Activated B cell treated with CpG ODN at 0.5 μM for 24 hours (primary cell): ENCODE measurements at regions of chr12 and their contacts with region 1.

Region 1: GRCh38 chr12:131642101-131642540 is 68.8 kb upstream of the SFSWAP start:
- DNase-seq: no peak
- ATAC-seq: no peak
- H3K4me3 Mint-ChIP-seq: no peak overlapping the region
- H3K27ac Mint-ChIP-seq: no peak overlapping the region
- H3K4me1 Mint-ChIP-seq: no peaks in the 10 kb centered on the region
- H3K27me3 Mint-ChIP-seq: peaks cover 8% of the 10 kb centered on the region
- CTCF ChIP-seq: no peak

Region 2: DNA sequence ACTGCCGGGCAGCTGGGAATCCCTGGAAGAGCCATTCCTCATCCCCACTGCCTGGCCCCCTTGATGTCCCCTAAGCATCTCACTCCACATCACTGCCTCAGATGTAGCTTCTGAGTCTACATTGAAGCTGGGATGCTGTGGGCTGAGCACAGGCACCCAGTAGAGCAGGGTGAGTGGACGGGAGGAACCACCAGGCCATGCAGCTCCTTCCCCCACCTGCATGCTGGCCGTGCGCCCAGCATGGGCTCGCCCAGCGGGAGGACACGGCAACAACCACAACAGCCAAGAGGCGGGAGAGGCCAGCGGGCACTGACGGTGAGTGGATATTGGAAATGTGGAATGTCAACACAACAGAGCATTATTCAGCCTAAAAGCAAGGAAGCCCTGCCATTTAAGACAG is 377.5 kb before region 1 on chr12:
- CTCF ChIA-PET with region 1: no interaction called
- POLR2A ChIA-PET with region 1: no interaction called
- intact Hi-C with region 1: no loop called
- DNase-seq: no peak
- ATAC-seq: no peak
- H3K4me3 Mint-ChIP-seq: no peak overlapping the region
- H3K27ac Mint-ChIP-seq: no peak overlapping the region
- H3K4me1 Mint-ChIP-seq: no peaks in the 10 kb centered on the region
- H3K27me3 Mint-ChIP-seq: no peaks in the 10 kb centered on the region
- CTCF ChIP-seq: no peak

Region 3: DNA sequence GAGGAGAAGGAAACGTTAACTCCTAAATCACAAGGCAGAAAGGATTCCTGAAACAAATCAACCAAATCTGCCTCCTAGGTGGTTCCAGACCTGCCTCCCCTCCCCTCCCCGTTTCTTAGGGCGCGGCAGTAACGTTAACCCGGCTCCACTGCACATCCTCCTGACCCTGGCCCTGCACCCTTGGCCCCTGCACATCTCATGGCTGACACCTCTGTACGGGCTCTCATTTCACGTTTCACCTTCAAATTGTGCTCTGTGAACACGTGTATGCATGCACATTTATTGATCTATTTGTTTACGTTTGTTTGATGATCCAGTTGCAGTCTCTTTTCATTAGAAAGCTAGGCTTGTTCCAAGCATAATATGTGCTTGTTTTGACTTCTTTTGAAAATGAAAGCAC is 330.4 kb before region 1 on chr12:
- CTCF ChIA-PET with region 1: no interaction called
- POLR2A ChIA-PET with region 1: no interaction called
- intact Hi-C with region 1: loop called (anchors 5 kb)
- DNase-seq: no peak
- ATAC-seq: no peak
- H3K4me3 Mint-ChIP-seq: no peak overlapping the region
- H3K27ac Mint-ChIP-seq: no peak overlapping the region
- H3K4me1 Mint-ChIP-seq: peaks cover 4% of the 10 kb centered on the region
- H3K27me3 Mint-ChIP-seq: peaks cover 7% of the 10 kb centered on the region
- CTCF ChIP-seq: no peak